A673 (cell line): ENCODE measurements at regions of chr9 and their contacts with region 1.

Region 1: GRCh38 chr9:79129865-79130480 is 441.8 kb upstream of the TLE4 start:
- DNase-seq: peak; percentile 61
- H3K4me3 ChIP-seq: no peak overlapping the region
- H3K27ac ChIP-seq: no peak overlapping the region
- H3K4me1 ChIP-seq: no peaks in the 10 kb centered on the region
- H3K27me3 ChIP-seq: peaks cover 13% of the 10 kb centered on the region
- CTCF ChIP-seq: peak; percentile 89

Region 2: DNA sequence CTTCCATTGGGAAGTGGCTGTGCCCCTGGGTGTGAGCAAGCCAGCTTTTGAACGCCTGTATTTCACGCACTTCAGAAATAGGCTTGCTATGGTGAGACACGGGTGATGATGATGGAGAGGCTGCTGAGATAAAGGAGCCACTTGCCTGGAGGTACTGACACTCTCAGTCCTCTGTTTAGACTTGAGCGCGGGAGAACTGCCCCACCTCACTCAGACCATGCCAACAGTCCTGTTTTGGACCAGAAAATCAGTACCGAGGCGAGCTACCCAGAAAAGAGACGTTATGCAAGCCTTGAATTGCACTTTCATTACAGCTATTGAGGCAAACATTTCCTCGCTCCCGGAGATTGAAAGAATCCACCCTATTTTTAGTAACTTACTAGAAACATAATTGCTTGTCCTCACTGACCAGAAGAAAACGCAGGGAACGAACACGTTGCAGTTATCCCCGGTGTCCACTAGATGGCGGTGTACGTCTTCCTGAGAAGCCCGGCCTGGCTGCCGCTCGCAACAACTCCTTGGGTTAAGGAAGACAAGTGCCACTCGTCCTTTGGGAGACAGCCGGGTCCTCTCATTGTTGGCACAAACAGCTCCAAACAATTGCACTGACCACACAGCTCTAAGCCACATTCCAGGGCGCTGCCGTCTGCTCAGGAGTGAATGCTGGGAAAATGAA is 690.6 kb before region 1 on chr9:
- CTCF ChIA-PET with region 1: no interaction called
- POLR2A ChIA-PET with region 1: no interaction called
- intact Hi-C with region 1: loop called (anchors 10 kb)
- DNase-seq: peak; percentile 85
- H3K4me3 ChIP-seq: no peak overlapping the region
- H3K27ac ChIP-seq: no peak overlapping the region
- H3K4me1 ChIP-seq: peaks cover 5% of the 10 kb centered on the region
- H3K27me3 ChIP-seq: no peaks in the 10 kb centered on the region
- CTCF ChIP-seq: peak; percentile 97

Region 3: DNA sequence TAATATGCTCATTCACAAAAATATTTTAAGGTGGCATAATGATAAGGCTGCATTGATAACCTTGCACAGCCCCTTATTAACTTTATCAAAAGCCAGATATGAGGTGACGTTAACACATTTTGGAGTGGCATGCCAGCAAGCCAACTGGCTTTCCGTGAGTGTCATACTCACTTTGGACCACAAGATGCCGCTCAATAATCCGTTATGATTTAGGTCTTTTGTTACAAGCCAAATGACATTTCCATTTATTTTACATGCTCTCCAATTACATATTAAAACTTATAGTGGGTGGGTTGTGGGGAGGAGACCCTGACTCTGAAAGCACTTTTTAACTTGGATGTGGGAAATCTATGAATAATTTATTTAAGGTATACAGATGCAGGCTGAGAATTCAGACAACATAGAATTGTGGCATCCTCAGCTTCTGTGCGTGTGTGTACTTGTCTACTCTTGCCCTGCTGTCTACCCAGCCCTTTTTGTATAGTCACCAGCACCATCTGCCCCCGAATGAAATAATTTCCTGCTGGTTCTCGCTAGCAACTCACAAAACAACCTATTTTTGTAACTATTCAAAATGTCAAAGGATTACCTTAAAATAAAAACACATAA is 527.9 kb before region 1 on chr9:
- CTCF ChIA-PET with region 1: no interaction called
- POLR2A ChIA-PET with region 1: no interaction called
- intact Hi-C with region 1: loop called (anchors 5 kb)
- DNase-seq: peak; percentile 56
- H3K4me3 ChIP-seq: no peak overlapping the region
- H3K27ac ChIP-seq: no peak overlapping the region
- H3K4me1 ChIP-seq: peaks cover 7% of the 10 kb centered on the region
- H3K27me3 ChIP-seq: peaks cover 45% of the 10 kb centered on the region
- CTCF ChIP-seq: peak; percentile 80

Region 4: DNA sequence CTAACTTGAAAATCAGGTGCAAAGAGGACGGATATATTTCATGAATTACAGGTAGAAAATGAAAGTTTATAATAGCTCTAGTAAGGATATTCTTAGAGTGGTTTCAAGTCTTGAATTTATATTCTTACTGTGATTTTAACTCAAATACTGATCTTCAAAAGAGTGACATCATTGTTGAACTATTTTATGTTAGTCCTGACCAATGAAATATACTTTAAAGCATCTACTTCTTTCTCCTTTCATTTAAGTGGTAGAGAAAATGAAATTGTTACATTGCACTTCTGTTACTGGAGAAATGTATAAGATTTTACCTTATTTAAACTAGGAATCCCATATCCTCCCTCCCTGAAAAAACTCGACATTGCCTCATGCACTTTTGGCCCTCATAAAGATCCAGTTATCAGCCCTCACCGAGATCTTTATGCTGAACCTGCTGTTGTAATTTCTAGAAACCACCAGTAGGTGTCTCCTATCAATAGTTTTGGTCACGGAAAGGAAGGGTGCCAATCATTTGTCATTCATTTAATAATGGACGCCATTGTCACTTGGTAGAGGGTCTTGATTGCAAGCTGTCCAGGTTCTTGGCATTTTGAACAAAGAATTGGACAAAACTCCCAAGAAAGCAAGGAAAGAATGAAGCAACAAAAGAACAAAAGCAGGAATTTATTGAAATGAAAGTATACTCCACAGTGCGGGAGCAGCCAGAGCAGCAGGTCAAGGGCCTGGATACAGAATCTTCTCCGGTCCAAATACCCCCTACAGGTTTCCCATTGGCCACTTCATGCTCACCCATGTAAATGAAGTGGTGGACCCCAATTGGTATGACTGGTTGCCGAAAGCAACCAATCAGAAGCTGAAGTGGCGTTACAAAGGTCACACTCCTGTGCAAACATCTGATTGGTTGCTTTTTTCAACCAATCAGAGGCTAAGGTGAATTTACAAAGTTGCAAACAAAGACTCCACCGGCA is 308.8 kb before region 1 on chr9:
- CTCF ChIA-PET with region 1: no interaction called
- POLR2A ChIA-PET with region 1: no interaction called
- intact Hi-C with region 1: loop called (anchors 5 kb)
- DNase-seq: peak; percentile 68
- H3K4me3 ChIP-seq: no peak overlapping the region
- H3K27ac ChIP-seq: no peak overlapping the region
- H3K4me1 ChIP-seq: no peaks in the 10 kb centered on the region
- H3K27me3 ChIP-seq: no peaks in the 10 kb centered on the region
- CTCF ChIP-seq: peak; percentile 79